Endothelial cell of umbilical vein (primary cell): ENCODE measurements at regions of chr2 and their contacts with region 1.

Region 1: GRCh38 chr2:161160226-161161069 is at the start of gene TANK:
- DNase-seq: peak; percentile 84
- H3K4me3 ChIP-seq: peak within 1 kb of the TSS; percentile 30 to 89 (median 50)
- H3K27ac ChIP-seq: peak within 1 kb of the TSS; percentile 75
- H3K4me1 ChIP-seq: peaks cover 18% of the 10 kb centered on the region
- H3K27me3 ChIP-seq: no peaks in the 10 kb centered on the region
- CTCF ChIP-seq: no peak
- POLR2A ChIP-seq: peak; percentile 90
- total RNA-seq, gene TANK: 83.2 and 88.2 TPM in 2 replicates

Region 2: GRCh38 chr2:161136696-161137324 is 23.6 kb before region 1 on chr2:
- CTCF ChIA-PET with region 1: no interaction called
- POLR2A ChIA-PET with region 1: no interaction called
- dilution Hi-C with region 1: no loop called
- intact Hi-C with region 1: loop called (anchors 1 kb)
- DNase-seq: peak; percentile 90
- H3K4me3 ChIP-seq: peak overlapping the region in 2 of 3 experiments; percentile 32 to 78
- H3K27ac ChIP-seq: peak overlapping the region; percentile 88
- H3K4me1 ChIP-seq: peaks cover 45% of the 10 kb centered on the region
- H3K27me3 ChIP-seq: no peaks in the 10 kb centered on the region
- CTCF ChIP-seq: no peak
- POLR2A ChIP-seq: peak; percentile 59

Region 3: GRCh38 chr2:161243312-161243711 is 82.9 kb after region 1 on chr2:
- CTCF ChIA-PET with region 1: no interaction called
- POLR2A ChIA-PET with region 1: no interaction called
- dilution Hi-C with region 1: no loop called
- intact Hi-C with region 1: no loop called
- DNase-seq: no peak
- H3K4me3 ChIP-seq: no peak overlapping the region
- H3K27ac ChIP-seq: no peak overlapping the region
- H3K4me1 ChIP-seq: peaks cover 3% of the 10 kb centered on the region
- H3K27me3 ChIP-seq: peaks cover 0 to 4% of the 10 kb centered on the region in 2 experiments
- CTCF ChIP-seq: no peak
- POLR2A ChIP-seq: no peak